ENCODE measurements at regions of chr22 and their contacts with region 1.

Region 1: GRCh38 chr22:41746567-41747400 is 47.5 kb downstream of the MEI1 start:
- DNase-seq: peak; percentile 44
- H3K4me3 ChIP-seq: no peak overlapping the region
- H3K27ac ChIP-seq: no peak overlapping the region
- H3K27me3 ChIP-seq: peaks cover 27% of the 10 kb centered on the region
- CTCF ChIP-seq: peak; percentile 88

Region 2: DNA sequence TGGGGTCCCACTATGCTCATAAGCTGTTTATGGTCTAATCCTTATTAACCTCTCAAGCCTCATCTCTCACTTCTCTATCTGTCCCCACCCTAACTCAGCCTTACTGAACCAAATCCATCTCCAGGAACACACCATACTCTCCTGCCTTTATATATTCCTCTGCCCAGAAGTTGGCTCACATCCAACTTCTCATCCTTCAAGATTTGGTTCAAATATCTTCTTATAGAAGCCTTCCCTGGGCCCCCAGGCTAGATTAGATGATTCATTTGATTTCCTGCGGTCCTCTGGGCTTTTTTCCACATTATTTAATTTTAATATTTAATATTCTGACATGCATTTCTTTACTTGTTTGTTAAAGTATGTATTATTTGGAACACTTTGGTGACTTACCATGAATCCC is 24.3 kb before region 1 on chr22:
- CTCF ChIA-PET with region 1: interaction called, 10 read pairs
- POLR2A ChIA-PET with region 1: no interaction called
- DNase-seq: no peak
- H3K4me3 ChIP-seq: no peak overlapping the region
- H3K27ac ChIP-seq: no peak overlapping the region
- H3K27me3 ChIP-seq: peaks cover 6% of the 10 kb centered on the region
- CTCF ChIP-seq: no peak

Region 3: DNA sequence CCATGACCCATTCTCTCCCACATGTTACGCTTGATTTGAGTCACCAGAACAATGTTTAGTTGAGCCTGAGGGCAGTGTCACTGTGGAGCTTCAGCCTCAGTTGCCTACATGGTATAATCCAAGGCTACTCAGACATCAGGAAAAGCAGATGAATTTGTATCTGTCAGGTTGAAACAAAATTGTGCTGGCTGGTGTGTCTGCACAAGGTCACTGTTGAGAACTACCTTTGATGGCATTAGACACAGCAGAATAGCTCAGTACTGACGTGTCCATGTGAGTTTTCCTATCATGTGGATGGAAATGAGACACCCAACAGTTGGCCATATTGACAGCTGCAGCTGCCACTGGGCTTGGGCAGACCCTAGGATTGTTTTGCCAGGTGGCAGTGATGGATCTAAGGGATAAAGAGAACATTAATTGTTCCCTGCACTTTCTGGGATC is 69.4 kb after region 1 on chr22:
- CTCF ChIA-PET with region 1: no interaction called
- POLR2A ChIA-PET with region 1: no interaction called
- DNase-seq: no peak
- H3K4me3 ChIP-seq: no peak overlapping the region
- H3K27ac ChIP-seq: no peak overlapping the region
- H3K27me3 ChIP-seq: no peaks in the 10 kb centered on the region
- CTCF ChIP-seq: no peak

Region 4: DNA sequence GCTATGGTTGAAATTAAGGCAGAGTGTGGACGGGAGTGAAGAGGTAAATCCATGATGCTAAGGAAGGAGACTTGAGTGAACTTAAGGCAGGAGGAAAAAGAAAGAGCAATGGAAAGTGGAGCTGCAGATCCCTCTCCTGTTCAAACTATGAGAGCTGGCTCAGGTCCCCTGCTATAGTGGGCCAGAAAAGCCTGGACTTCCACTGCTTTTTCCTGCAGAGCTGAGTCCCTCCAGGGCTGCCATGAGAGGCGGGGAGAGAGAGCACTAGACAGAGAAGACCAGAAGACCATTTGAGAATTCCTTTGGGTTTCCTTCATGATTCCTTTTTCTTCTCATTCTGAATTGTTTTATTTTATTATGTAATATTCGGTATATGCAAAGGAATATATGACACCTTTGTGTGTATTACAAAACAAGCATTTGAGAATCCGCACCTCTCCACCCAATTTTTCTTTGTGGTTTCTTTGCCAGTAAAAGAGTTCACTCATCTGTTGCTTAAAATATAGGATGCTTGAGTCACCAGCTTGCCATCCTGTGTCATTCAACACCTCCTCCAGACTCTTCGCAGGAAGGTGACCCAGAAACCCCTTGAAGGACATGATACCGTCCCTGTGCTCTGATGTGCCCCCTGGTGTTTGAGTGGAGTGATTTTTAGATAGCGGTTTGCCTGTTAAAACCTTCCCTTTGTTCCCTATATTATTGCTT is 110.5 kb after region 1 on chr22:
- CTCF ChIA-PET with region 1: interaction called, 34 read pairs
- POLR2A ChIA-PET with region 1: no interaction called
- DNase-seq: no peak
- H3K4me3 ChIP-seq: no peak overlapping the region
- H3K27ac ChIP-seq: no peak overlapping the region
- H3K27me3 ChIP-seq: no peaks in the 10 kb centered on the region
- CTCF ChIP-seq: peak; percentile 73

Region 5: DNA sequence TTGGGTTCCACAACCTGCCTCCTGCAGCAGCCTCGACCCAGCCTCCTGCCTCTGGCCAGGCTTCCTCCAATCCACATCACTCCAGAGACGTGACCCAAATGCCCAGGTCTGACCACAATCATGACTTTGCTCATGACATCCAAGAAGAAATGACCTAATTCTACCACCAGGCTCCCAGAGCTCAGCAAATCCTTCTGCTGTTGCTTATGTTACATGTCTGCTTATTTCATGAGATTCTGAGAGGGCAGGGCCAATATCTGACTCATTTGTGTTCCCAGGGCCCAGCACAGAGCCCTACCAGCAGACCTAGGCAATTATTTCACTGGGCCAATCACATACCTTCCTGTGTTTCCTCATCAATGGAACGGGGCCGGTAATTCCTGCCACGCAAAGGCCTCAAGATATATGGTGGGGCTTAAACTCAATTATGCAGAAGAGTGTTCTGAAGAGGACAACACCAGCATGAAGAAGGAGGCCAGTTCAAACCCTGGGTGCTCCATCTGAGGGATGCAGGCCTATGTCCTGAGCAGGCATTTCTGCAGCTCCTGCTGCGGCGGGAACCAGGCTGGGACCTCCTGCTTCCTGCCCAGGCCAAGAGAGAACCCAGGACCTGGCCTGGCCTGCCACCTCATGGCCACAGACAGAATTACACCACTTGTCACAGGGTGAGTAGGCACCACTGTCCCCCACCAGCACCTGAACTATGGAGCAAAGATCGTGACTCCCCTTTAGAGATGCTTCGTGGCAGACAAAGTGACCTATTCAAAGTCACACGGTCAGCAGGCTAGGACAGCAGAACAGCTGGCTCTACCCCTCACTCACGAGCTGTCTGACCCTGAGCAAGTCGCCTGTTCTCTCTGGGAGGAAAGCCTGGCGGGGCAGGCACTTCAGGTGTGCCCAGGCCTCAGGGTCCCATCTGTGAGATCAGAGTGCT is 194.3 kb after region 1 on chr22:
- CTCF ChIA-PET with region 1: interaction called, 119 read pairs
- POLR2A ChIA-PET with region 1: no interaction called
- DNase-seq: peak; percentile 64
- H3K4me3 ChIP-seq: no peak overlapping the region
- H3K27ac ChIP-seq: peak overlapping the region; percentile 88
- H3K27me3 ChIP-seq: no peaks in the 10 kb centered on the region
- CTCF ChIP-seq: peak; percentile 89